ENCODE measurements at regions of chr4 and their contacts with region 1.

Region 1: DNA sequence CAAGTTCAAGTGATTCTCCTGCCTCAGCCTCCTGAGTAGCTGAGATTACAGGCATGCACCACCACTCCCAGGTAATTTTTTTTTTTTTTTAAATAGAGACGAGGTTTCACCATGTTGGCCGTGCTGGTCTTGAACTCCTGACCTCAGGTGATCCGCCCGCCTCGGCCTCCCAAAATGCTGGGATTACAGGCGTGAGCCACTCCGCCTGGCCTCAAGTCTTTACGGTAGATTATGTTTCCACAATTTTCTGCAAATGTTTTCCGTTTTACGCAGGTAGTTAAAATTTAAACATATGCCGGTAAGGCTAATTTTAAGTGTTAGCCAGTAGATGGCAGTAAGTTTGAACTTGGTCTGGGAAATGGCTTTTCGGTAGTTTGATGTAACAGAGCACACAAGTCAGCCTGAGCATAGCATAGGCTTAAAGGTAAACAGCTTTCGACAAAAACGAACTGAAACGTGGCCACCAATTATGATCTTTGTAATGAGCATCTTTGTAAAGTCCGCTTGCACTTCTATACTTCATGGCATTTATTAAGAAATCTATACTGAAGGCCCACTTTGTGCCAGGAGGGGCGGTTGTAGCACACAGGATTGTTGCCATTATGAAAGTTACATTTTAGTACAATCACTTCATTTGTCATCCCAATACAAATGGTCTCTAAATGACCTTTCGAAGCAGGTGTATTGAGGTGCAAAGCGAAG is 31.1 kb downstream of the CCKAR start:
- DNase-seq: no peak
- H3K4me3 ChIP-seq: no peak overlapping the region
- H3K27me3 ChIP-seq: no peaks in the 10 kb centered on the region; the same call in 1 of the 2 replicates
- CTCF ChIP-seq: peak; percentile 56

Region 2: GRCh38 chr4:26441102-26441501 is 18.1 kb before region 1 on chr4:
- CTCF ChIA-PET with region 1: no interaction called
- POLR2A ChIA-PET with region 1: no interaction called
- DNase-seq: no peak
- H3K4me3 ChIP-seq: no peak overlapping the region
- H3K27me3 ChIP-seq: no peaks in the 10 kb centered on the region
- CTCF ChIP-seq: no peak

Region 3: DNA sequence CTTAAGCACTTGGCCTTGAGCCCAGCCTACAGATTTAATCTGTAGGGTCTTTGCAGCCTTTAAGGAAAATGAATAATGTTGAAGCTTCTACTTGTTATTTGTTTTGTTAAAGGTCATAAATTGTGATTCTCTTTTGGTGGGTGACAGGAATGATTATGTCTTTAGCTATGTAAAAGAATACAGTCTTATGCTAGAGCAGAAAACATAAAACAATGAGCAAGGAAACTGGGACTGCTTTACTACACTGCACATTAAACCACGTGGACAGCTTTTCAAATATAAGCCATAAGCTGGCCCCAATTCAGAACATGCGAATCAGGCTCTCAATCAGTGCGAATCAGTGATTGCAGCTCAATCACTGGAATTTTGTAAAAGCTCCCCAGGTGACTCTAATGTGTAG is 83.8 kb after region 1 on chr4:
- CTCF ChIA-PET with region 1: no interaction called
- POLR2A ChIA-PET with region 1: no interaction called
- DNase-seq: no peak
- H3K4me3 ChIP-seq: no peak overlapping the region
- H3K27me3 ChIP-seq: no peaks in the 10 kb centered on the region
- CTCF ChIP-seq: no peak

Region 4: DNA sequence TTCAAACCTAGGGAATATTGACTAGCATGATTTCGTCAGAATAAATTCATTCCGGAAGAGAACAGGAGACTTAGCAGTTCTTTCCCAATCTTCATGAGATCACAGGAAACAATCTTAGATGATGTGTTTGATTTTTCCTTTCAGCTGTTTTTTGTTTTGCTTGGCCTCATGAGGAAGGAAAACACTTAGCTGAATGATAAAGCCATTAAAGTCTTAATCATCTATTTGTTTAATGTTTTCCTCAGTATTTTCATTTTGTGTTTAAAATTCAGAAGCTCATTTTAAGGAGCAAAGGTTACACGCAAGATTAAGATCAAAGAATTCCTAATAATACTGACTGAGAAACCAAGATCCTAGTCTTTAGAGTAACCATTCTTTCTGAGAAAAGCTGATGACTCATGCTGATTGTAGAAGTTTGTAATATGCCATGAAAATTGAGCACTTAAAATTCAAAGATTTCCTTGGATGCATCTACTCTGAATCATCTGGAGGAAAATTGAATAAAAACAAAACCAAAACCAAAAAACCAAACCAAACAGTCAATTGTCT is 109.3 kb after region 1 on chr4:
- CTCF ChIA-PET with region 1: interaction called, 3 read pairs
- POLR2A ChIA-PET with region 1: interaction called, 10 read pairs
- DNase-seq: peak; percentile 97
- H3K4me3 ChIP-seq: no peak overlapping the region
- H3K27me3 ChIP-seq: no peaks in the 10 kb centered on the region
- CTCF ChIP-seq: no peak

Region 5: GRCh38 chr4:26719954-26720552 is 260.8 kb after region 1 on chr4:
- CTCF ChIA-PET with region 1: interaction called, 64 read pairs
- POLR2A ChIA-PET with region 1: interaction called, 3 read pairs
- DNase-seq: no peak
- H3K4me3 ChIP-seq: no peak overlapping the region
- H3K27me3 ChIP-seq: no peaks in the 10 kb centered on the region
- CTCF ChIP-seq: peak; percentile 70